ENCODE measurements at regions of chr1 and their contacts with region 1.

Region 1: DNA sequence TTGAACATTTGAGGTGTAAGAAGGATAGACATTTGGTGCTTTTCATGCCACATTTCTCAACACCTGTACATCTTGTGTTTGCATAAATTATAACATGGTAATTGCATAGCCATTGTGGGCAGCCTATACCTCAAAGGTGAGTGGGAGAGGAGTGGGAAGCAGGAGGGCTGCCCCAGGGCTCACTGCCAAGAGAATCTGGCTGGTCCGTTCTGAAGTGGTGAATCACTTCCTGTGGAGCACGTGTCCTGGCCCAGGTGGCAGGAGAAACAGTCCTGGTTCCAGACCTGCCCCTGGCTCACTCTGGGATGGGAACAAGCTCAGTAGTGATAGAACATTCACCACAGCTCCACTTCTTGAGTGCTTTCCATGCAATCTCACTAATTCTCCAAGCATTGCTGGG is 11.6 kb upstream of the OLFML2B start:
- DNase-seq: no peak
- ATAC-seq: no peak
- H3K4me3 ChIP-seq: no peak overlapping the region
- H3K27ac ChIP-seq: no peak overlapping the region
- H3K4me1 ChIP-seq: no peaks in the 10 kb centered on the region
- H3K27me3 ChIP-seq: peaks cover 1 to 5% of the 10 kb centered on the region in 2 experiments; a peak in 2 of 4 replicates
- CTCF ChIP-seq: no peak
- EP300 ChIP-seq: no peak
- POLR2A ChIP-seq: no peak
- RAD21 ChIP-seq: no peak

Region 2: DNA sequence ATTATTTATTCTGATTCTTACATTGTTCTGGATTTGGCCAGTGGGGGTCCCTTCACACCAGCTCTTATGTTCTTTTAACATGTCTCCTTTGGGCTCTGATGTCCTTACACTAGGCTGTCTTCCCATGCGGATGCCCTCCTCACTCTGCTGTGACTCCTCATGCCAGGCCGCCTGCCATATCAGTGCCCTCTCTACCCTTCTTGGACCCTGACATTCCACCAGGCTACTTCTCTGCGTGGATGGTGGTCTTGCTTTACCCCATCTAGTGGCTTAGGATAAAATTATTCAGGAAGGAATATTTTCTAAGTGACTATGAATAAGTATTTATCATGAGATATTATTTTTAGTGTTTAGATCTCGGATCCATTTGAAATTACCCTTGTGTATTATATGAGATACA is 247.9 kb before region 1 on chr1:
- CTCF ChIA-PET with region 1: interaction called, 214 read pairs
- POLR2A ChIA-PET with region 1: interaction called, 7 read pairs
- RAD21 ChIA-PET with region 1: interaction called, 152 read pairs
- SMC1A ChIA-PET with region 1: interaction called, 132 read pairs
- in situ Hi-C with region 1: loop called (anchors 5 kb)
- intact Hi-C with region 1: loop called (anchors 2 kb)
- DNase-seq: no peak
- ATAC-seq: no peak
- H3K4me3 ChIP-seq: no peak overlapping the region
- H3K27ac ChIP-seq: no peak overlapping the region
- H3K4me1 ChIP-seq: peaks cover 6% of the 10 kb centered on the region
- H3K27me3 ChIP-seq: no peaks in the 10 kb centered on the region
- CTCF ChIP-seq: no peak
- EP300 ChIP-seq: no peak
- POLR2A ChIP-seq: no peak
- RAD21 ChIP-seq: no peak

Region 3: DNA sequence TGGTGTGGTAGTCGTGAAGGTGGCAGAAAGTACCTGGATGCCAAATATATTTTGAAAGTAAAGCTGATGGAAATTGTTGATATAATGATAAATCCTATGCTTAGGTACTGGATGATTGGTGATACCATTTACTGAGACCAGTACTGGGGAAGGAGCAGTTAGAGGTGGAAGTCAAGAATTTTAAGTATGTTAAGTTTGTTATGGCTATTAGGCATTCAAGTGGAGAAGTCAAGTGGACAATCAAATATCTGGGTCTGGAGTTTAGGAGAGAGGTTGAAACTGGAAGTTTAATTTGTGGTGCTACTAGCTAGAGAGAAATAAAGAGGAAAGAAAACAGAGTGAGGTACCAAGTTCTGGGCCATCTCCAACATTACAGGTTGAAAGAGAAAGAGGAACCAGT is 180.0 kb before region 1 on chr1:
- CTCF ChIA-PET with region 1: interaction called, 12 read pairs
- POLR2A ChIA-PET with region 1: no interaction called
- RAD21 ChIA-PET with region 1: interaction called, 13 read pairs
- SMC1A ChIA-PET with region 1: interaction called, 3 read pairs
- in situ Hi-C with region 1: no loop called
- intact Hi-C with region 1: no loop called
- DNase-seq: no peak
- ATAC-seq: no peak
- H3K4me3 ChIP-seq: no peak overlapping the region
- H3K27ac ChIP-seq: no peak overlapping the region
- H3K4me1 ChIP-seq: no peaks in the 10 kb centered on the region
- H3K27me3 ChIP-seq: no peaks in the 10 kb centered on the region
- CTCF ChIP-seq: no peak
- EP300 ChIP-seq: no peak
- POLR2A ChIP-seq: no peak
- RAD21 ChIP-seq: no peak

Region 4: GRCh38 chr1:161864577-161864976 is 170.7 kb before region 1 on chr1:
- CTCF ChIA-PET with region 1: interaction called, 12 read pairs
- POLR2A ChIA-PET with region 1: no interaction called
- RAD21 ChIA-PET with region 1: interaction called, 15 read pairs
- SMC1A ChIA-PET with region 1: interaction called, 5 read pairs
- in situ Hi-C with region 1: no loop called
- intact Hi-C with region 1: no loop called
- DNase-seq: no peak
- ATAC-seq: no peak
- H3K4me3 ChIP-seq: no peak overlapping the region
- H3K27ac ChIP-seq: no peak overlapping the region
- H3K4me1 ChIP-seq: no peaks in the 10 kb centered on the region
- H3K27me3 ChIP-seq: no peaks in the 10 kb centered on the region
- CTCF ChIP-seq: peak in 1 of 3 experiments; percentile 23; a peak in 1 of 6 replicates
- EP300 ChIP-seq: no peak
- POLR2A ChIP-seq: no peak
- RAD21 ChIP-seq: no peak

Region 5: GRCh38 chr1:161905269-161905884 is 129.9 kb before region 1 on chr1:
- CTCF ChIA-PET with region 1: interaction called, 26 read pairs
- POLR2A ChIA-PET with region 1: no interaction called
- RAD21 ChIA-PET with region 1: interaction called, 8 read pairs
- SMC1A ChIA-PET with region 1: interaction called, 11 read pairs
- in situ Hi-C with region 1: no loop called
- intact Hi-C with region 1: no loop called
- DNase-seq: no peak
- ATAC-seq: peak; percentile 91
- H3K4me3 ChIP-seq: no peak overlapping the region
- H3K27ac ChIP-seq: no peak overlapping the region
- H3K4me1 ChIP-seq: 0 out of 2 replicates have a peak, but pooled peaks cover 4% of the 10 kb centered on the region
- H3K27me3 ChIP-seq: no peaks in the 10 kb centered on the region
- CTCF ChIP-seq: peak; percentile 45 to 68 (median 53)
- EP300 ChIP-seq: no peak
- POLR2A ChIP-seq: no peak
- RAD21 ChIP-seq: peak; percentile 49

Region 6: DNA sequence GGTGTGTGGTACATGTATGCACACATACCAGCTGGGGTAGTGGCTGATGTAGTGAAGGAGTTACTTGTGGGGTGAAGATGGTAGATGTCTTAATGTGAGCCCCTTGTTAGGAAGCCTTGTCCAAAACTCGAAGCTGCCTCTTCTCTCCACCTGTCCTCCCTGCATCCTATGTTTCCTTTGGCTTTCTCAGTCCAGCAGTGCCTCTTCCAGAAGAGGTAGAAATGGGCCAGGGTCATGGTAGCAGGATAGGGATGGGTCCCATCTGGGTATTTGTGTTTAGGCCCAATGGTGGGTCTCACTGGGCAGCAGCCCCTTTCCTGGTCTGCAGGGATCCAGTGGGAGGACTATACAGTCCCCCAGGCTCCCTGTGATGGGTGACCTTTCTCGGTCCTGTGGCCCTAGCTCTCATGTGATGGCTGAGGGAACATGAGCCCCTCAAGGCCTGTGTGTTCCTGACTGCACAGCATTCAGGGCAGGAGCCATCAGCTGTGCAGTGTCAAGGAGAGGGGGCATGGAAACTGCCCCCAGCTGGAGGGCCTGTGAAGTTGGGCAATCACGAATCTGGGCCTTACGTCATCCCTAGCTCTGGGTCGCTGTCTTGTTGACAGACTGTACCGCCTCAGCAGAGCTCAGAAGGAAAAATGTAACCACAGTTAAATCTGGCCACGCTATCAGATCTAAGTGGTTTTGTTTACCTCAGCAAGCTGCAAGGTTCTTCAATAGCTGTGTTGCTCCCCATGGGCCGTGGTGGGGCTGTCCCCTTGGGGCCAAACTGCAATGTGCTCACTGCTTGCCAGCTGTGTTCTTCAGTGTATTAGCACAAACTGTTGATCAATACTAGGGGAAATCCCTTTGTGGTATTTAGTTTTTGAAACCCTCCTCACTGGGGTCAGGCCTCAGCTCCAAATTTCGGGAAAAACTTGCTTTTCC is 116.9 kb after region 1 on chr1:
- CTCF ChIA-PET with region 1: no interaction called
- POLR2A ChIA-PET with region 1: no interaction called
- RAD21 ChIA-PET with region 1: no interaction called
- SMC1A ChIA-PET with region 1: no interaction called
- in situ Hi-C with region 1: no loop called
- intact Hi-C with region 1: no loop called
- DNase-seq: no peak
- ATAC-seq: peak; percentile 36
- H3K4me3 ChIP-seq: no peak overlapping the region
- H3K27ac ChIP-seq: no peak overlapping the region
- H3K4me1 ChIP-seq: no peaks in the 10 kb centered on the region
- H3K27me3 ChIP-seq: no peaks in the 10 kb centered on the region
- CTCF ChIP-seq: no peak
- EP300 ChIP-seq: no peak
- POLR2A ChIP-seq: no peak
- RAD21 ChIP-seq: no peak

Measured in GM12878 (cell line).